Calu3 (cell line): ENCODE measurements at regions of chr12 and their contacts with region 1.

Region 1: DNA sequence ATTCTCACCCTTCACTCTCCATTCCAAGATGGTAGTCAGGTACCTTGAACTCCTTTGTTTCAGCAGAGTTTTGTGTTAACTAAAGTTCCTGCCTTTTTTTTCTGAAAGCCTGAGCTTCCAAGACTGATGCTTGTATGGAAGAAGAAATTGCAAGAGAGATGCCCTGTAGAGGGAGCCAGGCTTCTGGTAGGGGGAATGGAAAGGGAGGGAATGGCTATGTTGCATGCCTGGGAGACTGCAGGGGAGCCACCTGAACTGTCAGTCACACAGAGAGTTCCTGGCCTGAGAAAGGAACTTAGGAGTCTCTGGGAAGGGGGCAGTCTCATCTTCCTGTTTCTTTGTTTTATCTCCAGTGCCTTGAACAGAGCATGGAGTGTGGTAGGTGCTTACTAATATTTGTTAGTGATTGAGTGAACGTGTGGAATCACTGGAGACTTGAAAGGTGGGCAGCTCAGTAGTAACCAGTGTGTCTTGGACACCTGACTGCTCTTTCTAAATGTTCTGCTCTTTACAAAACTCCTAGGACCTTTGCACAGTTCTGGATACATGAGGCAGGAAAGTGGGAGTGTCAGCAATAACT is 132.2 kb downstream of the ANO4 start:
- DNase-seq: peak; percentile 65
- H3K4me3 Mint-ChIP-seq: no peak overlapping the region
- H3K27ac Mint-ChIP-seq: no peak overlapping the region
- H3K4me1 Mint-ChIP-seq: peaks cover 24% of the 10 kb centered on the region
- H3K27me3 Mint-ChIP-seq: no peaks in the 10 kb centered on the region
- CTCF ChIP-seq: peak; percentile 59

Region 2: GRCh38 chr12:100942984-100943749 is 16.4 kb after region 1 on chr12:
- CTCF ChIA-PET with region 1: no interaction called
- intact Hi-C with region 1: no loop called
- DNase-seq: no peak
- H3K4me3 Mint-ChIP-seq: no peak overlapping the region
- H3K27ac Mint-ChIP-seq: no peak overlapping the region
- H3K4me1 Mint-ChIP-seq: no peaks in the 10 kb centered on the region
- H3K27me3 Mint-ChIP-seq: no peaks in the 10 kb centered on the region
- CTCF ChIP-seq: no peak

Region 3: GRCh38 chr12:101018540-101018939 is 91.8 kb after region 1 on chr12:
- CTCF ChIA-PET with region 1: no interaction called
- intact Hi-C with region 1: no loop called
- DNase-seq: peak; percentile 88
- H3K4me3 Mint-ChIP-seq: peak overlapping the region; percentile 12
- H3K27ac Mint-ChIP-seq: peak overlapping the region; percentile 99
- H3K4me1 Mint-ChIP-seq: peaks cover 54% of the 10 kb centered on the region
- H3K27me3 Mint-ChIP-seq: no peaks in the 10 kb centered on the region
- CTCF ChIP-seq: no peak

Region 4: GRCh38 chr12:101038289-101038871 is 111.6 kb after region 1 on chr12:
- CTCF ChIA-PET with region 1: no interaction called
- intact Hi-C with region 1: no loop called
- DNase-seq: no peak
- H3K4me3 Mint-ChIP-seq: no peak overlapping the region
- H3K27ac Mint-ChIP-seq: no peak overlapping the region
- H3K4me1 Mint-ChIP-seq: peaks cover 33% of the 10 kb centered on the region
- H3K27me3 Mint-ChIP-seq: no peaks in the 10 kb centered on the region
- CTCF ChIP-seq: no peak

Region 5: DNA sequence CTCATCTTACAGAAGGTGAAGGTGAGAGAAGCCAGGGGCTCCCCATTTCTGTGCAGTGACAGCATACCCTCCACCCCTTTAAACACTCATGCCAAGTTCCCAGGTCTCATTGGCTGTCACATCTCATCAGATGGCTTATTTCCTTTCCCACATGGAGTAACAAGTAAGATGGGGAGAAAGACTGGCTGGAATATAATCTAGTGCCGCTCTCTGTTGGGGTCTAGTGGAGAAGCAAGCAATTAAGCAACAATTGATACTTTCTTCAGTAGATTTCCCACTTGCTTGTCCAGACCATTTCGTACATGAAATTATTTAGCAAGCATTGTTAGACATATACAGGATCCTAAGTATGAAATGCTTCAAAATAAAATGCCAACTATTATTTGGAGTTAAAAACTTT is 191.1 kb after region 1 on chr12:
- CTCF ChIA-PET with region 1: no interaction called
- intact Hi-C with region 1: loop called (anchors 10 kb)
- DNase-seq: no peak
- H3K4me3 Mint-ChIP-seq: no peak overlapping the region
- H3K27ac Mint-ChIP-seq: no peak overlapping the region
- H3K4me1 Mint-ChIP-seq: no peaks in the 10 kb centered on the region
- H3K27me3 Mint-ChIP-seq: no peaks in the 10 kb centered on the region
- CTCF ChIP-seq: no peak

Region 6: GRCh38 chr12:101280006-101280505 is 353.3 kb after region 1 on chr12 and contains the start of gene UTP20:
- CTCF ChIA-PET with region 1: interaction called, 3 read pairs
- intact Hi-C with region 1: loop called (anchors 2 kb)
- DNase-seq: peak; percentile 97
- H3K4me3 Mint-ChIP-seq: peak within 1 kb of the TSS; percentile 92
- H3K27ac Mint-ChIP-seq: peak within 1 kb of the TSS; percentile 91
- H3K4me1 Mint-ChIP-seq: peaks cover 30% of the 10 kb centered on the region
- H3K27me3 Mint-ChIP-seq: no peaks in the 10 kb centered on the region
- CTCF ChIP-seq: no peak
- total RNA-seq, gene UTP20: 36.6 and 42.2 TPM in 2 replicates

Region 7: GRCh38 chr12:101323255-101323654 is 396.5 kb after region 1 on chr12:
- CTCF ChIA-PET with region 1: interaction called, 7 read pairs
- intact Hi-C with region 1: loop called (anchors 1 kb)
- DNase-seq: no peak
- H3K4me3 Mint-ChIP-seq: no peak overlapping the region
- H3K27ac Mint-ChIP-seq: no peak overlapping the region
- H3K4me1 Mint-ChIP-seq: no peaks in the 10 kb centered on the region
- H3K27me3 Mint-ChIP-seq: no peaks in the 10 kb centered on the region
- CTCF ChIP-seq: no peak